ENCODE measurements at regions of chr15 and their contacts with region 1.

Region 1: DNA sequence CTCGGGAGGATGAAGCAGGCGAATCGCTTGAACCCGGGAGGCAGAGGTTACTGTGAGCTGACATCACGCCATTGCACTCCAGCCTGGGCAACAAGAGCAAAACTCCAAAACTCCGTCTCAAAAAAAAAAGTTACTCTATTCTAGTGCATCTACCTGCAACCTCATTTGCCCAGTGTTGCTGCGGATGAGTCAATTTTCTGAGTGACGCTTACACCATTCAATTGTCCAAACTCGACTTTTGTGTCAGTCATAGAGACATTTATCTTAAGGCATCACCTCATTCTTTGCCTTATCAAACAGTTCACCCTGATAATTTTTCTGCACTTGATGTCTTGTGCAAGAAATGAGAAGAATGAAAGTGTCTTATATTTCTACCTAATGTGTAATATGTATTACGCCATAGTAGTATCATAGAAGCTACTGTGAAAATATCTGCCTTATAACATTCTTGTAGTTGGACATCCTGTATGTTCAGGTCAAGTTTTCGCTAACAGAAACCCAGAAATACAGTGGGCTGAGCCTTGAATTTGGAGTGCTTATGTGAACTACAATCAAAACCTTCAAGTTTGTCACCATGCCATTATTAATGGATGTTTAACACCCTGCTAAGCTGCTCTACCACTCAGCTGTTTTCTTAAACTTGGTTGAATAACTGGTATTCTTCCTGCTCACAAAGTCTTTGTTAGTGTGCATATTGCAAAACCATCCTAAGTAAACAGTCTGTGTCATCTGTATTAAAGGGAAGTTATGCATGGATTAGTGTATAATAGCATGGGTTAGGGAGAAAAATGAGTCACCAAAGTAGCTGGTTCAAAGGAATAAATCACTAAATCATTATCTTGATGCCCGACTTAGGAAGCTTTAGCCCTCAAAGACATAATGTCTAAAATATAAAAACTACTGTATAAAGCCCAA is 531.0 kb upstream of the NR2F2 start:
- DNase-seq: no peak
- ATAC-seq: no peak
- H3K4me3 ChIP-seq: no peak overlapping the region
- H3K4me1 ChIP-seq: no peaks in the 10 kb centered on the region
- CTCF ChIP-seq: no peak

Region 2: DNA sequence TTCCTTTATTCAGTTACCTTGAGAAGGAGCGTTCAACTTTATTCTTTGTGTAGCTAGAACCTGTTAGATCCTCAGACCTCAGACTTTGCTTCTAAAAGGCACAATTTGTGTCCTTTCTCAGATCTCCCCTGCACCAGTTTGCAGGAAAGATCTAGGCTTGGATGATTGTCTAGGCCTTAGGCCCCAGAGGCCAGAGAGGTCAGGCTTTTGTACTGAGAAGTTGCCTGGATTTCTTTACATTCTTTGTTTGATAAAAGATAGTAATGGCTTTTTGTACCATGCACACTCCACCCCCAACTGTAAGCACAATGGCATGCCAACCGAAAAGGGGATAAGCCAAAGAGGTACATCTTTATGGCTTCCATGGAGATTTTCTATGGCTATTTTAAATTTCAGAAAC is 188.6 kb before region 1 on chr15:
- intact Hi-C with region 1: loop called in 1 of 2 experiments (anchors 5 kb)
- DNase-seq: no peak
- ATAC-seq: no peak
- H3K4me3 ChIP-seq: no peak overlapping the region
- H3K4me1 ChIP-seq: no peaks in the 10 kb centered on the region
- CTCF ChIP-seq: no peak

Region 3: GRCh38 chr15:95669146-95669939 is 130.2 kb before region 1 on chr15:
- intact Hi-C with region 1: no loop called
- DNase-seq: no peak
- ATAC-seq: no peak
- H3K4me3 ChIP-seq: no peak overlapping the region
- H3K4me1 ChIP-seq: no peaks in the 10 kb centered on the region
- CTCF ChIP-seq: no peak

Region 4: DNA sequence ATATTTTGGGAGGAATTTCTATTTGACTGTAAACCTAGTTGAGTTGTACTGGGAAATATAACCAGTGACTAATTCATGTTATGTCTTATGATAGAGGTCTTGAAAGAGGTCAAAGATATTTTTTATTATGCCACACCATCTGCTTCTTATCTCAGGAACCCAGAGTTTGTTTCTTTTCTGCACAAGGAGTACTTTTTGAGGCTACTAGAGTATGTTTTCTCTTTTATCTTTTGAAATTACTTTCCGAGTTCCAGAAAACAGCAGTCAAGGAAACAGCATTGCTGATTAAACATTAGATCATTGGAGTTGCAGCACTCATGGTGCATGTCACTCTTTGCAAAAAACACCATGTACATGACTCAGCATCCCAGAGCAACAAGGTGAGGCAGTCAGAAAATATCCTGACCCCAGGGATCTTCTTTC is 114.8 kb before region 1 on chr15:
- intact Hi-C with region 1: no loop called
- DNase-seq: no peak
- ATAC-seq: no peak
- H3K4me3 ChIP-seq: no peak overlapping the region
- H3K4me1 ChIP-seq: no peaks in the 10 kb centered on the region
- CTCF ChIP-seq: no peak

Measured in mucosa of descending colon (tissue), 3 donors.